A549 (cell line): ENCODE measurements at regions of chr12 and their contacts with region 1.

Region 1: DNA sequence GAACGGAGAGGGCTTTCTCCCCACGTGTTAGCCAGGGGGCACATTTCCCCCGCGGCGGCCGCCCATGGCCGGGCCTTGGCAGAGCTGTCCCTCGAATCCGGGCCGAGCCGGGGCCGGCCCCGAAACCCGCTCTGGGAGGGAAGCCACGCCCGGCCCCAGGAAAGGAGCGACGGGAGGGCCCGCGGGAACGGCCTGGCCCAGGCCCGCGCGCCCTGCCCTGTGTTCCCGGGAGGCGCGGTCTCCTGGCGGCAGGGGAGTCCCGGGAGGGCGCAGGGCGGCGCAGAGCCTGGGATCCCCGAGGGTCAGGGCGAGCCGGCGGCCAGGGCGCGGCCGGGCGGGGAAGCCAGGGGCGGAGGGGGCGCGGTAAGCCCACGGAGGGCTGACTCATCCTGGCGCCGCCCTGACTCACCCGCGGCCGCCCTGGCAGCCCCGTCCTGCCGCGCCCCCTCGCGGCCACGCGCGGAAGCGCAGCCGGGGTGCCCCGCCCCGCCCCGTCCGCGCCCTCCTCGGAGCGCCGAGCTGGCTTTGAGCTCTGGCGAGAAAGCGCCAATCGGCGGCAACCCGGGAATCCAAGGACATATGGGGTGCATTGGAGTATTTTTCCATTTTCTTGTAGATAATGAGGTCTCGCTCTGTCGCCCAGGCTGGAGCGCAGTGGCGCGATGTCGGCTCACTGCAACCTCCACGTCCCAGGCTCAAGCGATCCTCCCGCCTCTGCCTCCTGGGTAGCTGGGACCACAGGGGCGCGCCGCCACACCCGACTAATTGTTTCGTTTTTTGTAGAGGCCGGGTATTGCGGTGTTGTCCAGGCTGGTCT is 31.8 kb upstream of the PLEKHG6 start:
- DNase-seq: peak; percentile 71 to 88
- ATAC-seq: peak; percentile 81 to 87
- H3K4me3 ChIP-seq: peak overlapping the region; percentile 50
- H3K27ac ChIP-seq: peak overlapping the region; percentile 97
- H3K4me1 ChIP-seq: peaks cover 40% of the 10 kb centered on the region
- CTCF ChIP-seq: peak; percentile 94
- EP300 ChIP-seq: no peak; a peak in 1 of 5 replicates
- POLR2A ChIP-seq: peak; percentile 45
- RAD21 ChIP-seq: peak; percentile 63 to 95

Region 2: GRCh38 chr12:5898876-5899275 is 379.8 kb before region 1 on chr12:
- CTCF ChIA-PET with region 1: no interaction called
- POLR2A ChIA-PET with region 1: no interaction called
- DNase-seq: peak; percentile 23 to 33
- ATAC-seq: peak; percentile 55 to 64; a peak in 2 of 6 replicates
- H3K4me3 ChIP-seq: no peak overlapping the region
- H3K27ac ChIP-seq: no peak overlapping the region
- H3K4me1 ChIP-seq: no peaks in the 10 kb centered on the region
- CTCF ChIP-seq: no peak
- EP300 ChIP-seq: no peak
- POLR2A ChIP-seq: no peak
- RAD21 ChIP-seq: peak in 1 of 2 experiments; percentile 30; a peak in 2 of 5 replicates

Region 3: GRCh38 chr12:5988659-5989116 is 290.0 kb before region 1 on chr12:
- CTCF ChIA-PET with region 1: interaction called, 60 read pairs
- POLR2A ChIA-PET with region 1: no interaction called
- DNase-seq: peak; percentile 73 to 80
- ATAC-seq: peak; percentile 92 to 99
- H3K4me3 ChIP-seq: no peak overlapping the region
- H3K27ac ChIP-seq: no peak overlapping the region
- H3K4me1 ChIP-seq: no peaks in the 10 kb centered on the region
- CTCF ChIP-seq: peak; percentile 90
- EP300 ChIP-seq: no peak
- POLR2A ChIP-seq: no peak
- RAD21 ChIP-seq: peak; percentile 94 to 95

Region 4: DNA sequence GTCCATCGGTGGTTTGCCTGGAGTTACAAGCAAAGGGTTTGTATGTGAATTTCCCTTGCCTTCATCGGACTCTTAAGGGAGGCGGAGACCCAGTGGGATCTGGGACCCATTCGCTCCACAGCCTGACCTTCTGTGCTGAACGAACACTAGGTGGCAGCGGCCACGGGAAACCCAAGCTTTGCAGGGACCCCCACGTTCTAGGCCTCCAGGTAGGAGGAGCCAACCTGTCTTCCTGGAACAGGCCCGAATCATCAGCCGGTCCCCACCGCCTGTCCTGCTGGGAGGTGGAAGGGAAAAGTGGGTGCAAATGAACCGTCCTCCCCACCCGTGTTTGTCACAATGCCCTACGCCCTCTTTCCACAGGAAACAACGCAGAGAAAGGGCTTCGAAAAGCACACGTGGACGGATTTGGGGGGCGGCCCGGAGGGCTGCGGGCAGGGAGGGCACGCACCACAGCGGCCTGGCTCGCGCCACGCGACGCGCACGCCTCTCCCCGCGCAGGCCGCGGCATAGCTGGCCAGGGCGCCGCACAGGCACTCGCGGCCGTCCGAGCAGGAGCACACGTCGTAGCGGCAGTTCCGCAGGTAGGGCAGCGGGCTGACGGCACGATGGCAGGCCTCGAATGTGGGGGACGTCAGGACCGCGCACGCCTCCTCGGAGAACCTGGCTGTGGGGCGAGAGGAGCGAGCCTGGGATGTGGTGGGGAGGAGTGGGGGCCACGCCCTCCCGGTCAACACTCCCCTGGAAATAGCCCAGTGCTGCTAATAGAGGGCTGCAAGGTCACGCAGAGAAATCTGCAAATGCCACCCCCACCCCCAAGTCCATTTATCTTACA is 222.0 kb before region 1 on chr12:
- CTCF ChIA-PET with region 1: interaction called, 18 read pairs
- POLR2A ChIA-PET with region 1: no interaction called
- DNase-seq: peak in 1 of 2 experiments; percentile 39
- ATAC-seq: peak in 1 of 2 experiments; percentile 78; a peak in 3 of 6 replicates
- H3K4me3 ChIP-seq: no peak overlapping the region
- H3K27ac ChIP-seq: no peak overlapping the region
- H3K4me1 ChIP-seq: no peaks in the 10 kb centered on the region
- CTCF ChIP-seq: no peak; the same call in 2 of the 3 replicates
- EP300 ChIP-seq: no peak
- POLR2A ChIP-seq: no peak
- RAD21 ChIP-seq: 0 out of 5 replicates have a peak, but pooled peaks of 1 of the 2 experiments have one; percentile 12

Region 5: DNA sequence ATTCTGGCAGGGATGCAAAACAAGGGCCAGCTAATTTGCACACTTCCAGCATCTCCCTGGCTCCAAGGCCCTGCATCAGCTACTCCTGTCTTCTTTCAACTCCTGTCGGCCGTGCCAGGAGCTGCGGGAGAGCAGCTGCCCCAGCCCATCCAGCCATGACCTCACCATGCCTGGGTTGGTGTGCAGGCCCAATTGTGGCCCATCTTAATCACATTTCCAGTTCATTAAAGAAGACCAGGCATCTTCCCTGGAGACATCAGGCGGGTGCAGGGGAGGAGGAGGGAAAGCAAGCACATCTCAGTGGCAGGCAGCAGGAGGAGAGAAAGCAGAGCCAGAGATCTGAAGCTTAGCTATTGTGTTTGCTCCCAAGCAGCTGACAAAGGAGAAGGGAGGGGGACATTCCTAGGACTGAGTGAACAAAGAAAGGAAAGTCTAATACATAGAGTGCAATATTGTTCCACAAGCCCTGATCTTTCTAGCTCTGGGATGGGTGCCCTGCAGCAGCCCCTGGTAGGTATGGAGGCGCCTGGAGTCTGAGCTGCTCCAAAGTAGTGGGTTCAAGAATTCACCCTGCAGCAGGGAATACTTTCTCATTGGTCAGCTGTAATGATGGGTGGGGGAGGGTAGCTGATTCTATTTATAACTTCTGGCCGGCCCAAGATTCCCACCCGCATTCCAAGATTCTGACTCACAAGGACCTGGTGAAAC is 194.2 kb before region 1 on chr12:
- CTCF ChIA-PET with region 1: interaction called, 11 read pairs
- POLR2A ChIA-PET with region 1: no interaction called
- DNase-seq: peak; percentile 46 to 57
- ATAC-seq: peak; percentile 35 to 55; a peak in 3 of 6 replicates
- H3K4me3 ChIP-seq: no peak overlapping the region
- H3K27ac ChIP-seq: peak overlapping the region in 1 of 2 experiments; percentile 31; a peak in 1 of 6 replicates
- H3K4me1 ChIP-seq: peaks cover 20% of the 10 kb centered on the region
- CTCF ChIP-seq: no peak
- EP300 ChIP-seq: no peak
- POLR2A ChIP-seq: no peak
- RAD21 ChIP-seq: no peak

Region 6: DNA sequence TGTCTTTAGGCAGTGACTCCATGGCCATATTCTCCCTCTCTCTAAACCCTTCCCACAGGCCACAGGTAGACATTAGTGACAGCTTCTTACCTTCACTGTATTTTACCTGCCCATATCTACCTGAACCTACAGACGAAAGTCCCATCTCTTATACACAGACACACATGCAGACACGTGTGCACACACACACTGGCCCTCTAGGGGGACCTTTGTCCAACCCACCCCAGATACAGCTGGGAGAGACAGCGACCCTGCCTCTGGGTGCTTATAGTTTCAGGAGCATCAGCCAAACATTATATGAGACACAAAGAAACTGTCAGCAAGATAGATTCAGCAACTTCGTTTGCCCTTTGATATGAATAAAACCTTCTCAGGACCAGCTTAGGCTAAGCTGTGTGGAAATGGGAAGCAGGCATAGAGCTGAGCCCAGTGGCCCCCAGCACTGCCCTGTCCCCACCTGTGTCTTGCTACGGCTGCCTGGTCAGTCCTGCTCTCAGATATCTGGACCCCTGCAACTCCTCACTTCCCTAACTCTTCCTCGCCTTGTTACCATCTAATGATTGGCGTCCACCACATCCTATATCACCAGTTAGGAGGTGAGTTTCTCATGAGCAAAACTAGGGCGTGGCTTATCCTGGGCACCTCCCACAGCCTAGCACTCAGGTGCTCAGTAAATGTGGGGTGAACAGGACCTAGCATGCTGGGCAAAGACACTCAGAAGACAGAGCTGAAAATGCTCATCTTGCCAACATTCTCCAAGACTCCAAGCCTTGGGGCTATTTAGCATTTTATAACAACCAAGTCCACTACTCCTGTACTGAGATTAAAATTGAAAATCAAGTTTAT is 90.5 kb before region 1 on chr12:
- CTCF ChIA-PET with region 1: interaction called, 529 read pairs
- POLR2A ChIA-PET with region 1: no interaction called
- DNase-seq: no peak
- ATAC-seq: peak; percentile 44 to 46; a peak in 4 of 6 replicates
- H3K4me3 ChIP-seq: no peak overlapping the region
- H3K27ac ChIP-seq: no peak overlapping the region
- H3K4me1 ChIP-seq: no peaks in the 10 kb centered on the region
- CTCF ChIP-seq: no peak
- EP300 ChIP-seq: no peak
- POLR2A ChIP-seq: no peak
- RAD21 ChIP-seq: no peak

Region 7: GRCh38 chr12:6241495-6241894 is 37.2 kb before region 1 on chr12:
- CTCF ChIA-PET with region 1: interaction called, 10 read pairs
- POLR2A ChIA-PET with region 1: no interaction called
- DNase-seq: no peak
- ATAC-seq: no peak; a peak in 1 of 6 replicates
- H3K4me3 ChIP-seq: no peak overlapping the region
- H3K27ac ChIP-seq: no peak overlapping the region
- H3K4me1 ChIP-seq: no peaks in the 10 kb centered on the region
- CTCF ChIP-seq: no peak
- EP300 ChIP-seq: no peak
- POLR2A ChIP-seq: no peak
- RAD21 ChIP-seq: no peak

Region 8: DNA sequence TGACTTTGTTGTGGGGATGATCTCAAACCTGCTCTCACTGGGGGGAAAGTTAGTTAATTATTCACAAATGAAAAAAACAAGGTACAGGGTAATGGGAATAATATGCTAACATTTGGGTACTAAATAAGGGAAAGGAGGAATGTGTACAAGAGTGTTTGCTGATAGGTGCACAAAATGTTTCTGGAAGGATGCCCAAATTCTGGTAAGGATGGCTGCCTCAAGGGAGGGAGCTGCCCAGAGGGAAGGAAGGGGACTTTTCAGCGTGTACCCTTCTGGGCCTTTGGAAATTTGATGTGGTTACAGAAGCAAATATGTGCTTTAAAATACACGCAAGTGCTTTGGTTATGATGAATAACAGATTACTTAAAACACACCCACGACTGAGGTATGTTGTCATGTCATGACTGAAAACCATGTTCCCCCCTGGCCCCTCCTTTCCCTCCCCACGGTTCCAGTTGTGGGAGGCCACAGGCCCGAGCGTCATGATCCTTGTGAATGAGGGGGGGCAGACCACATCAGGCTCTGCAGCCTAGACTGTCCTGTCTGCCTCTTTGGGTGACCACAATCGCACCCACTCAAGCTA is 11.4 kb before region 1 on chr12:
- CTCF ChIA-PET with region 1: interaction called, 61 read pairs
- POLR2A ChIA-PET with region 1: interaction called, 6 read pairs
- DNase-seq: no peak
- ATAC-seq: peak in 1 of 2 experiments; percentile 31; a peak in 3 of 6 replicates
- H3K4me3 ChIP-seq: no peak overlapping the region
- H3K27ac ChIP-seq: peak overlapping the region in 1 of 2 experiments; percentile 7; a peak in 1 of 6 replicates
- H3K4me1 ChIP-seq: peaks cover 11% of the 10 kb centered on the region
- CTCF ChIP-seq: no peak
- EP300 ChIP-seq: no peak
- POLR2A ChIP-seq: no peak
- RAD21 ChIP-seq: no peak